CD8-positive, alpha-beta T cell (primary cell): ENCODE measurements at regions of chr2 and their contacts with region 1.

Region 1: DNA sequence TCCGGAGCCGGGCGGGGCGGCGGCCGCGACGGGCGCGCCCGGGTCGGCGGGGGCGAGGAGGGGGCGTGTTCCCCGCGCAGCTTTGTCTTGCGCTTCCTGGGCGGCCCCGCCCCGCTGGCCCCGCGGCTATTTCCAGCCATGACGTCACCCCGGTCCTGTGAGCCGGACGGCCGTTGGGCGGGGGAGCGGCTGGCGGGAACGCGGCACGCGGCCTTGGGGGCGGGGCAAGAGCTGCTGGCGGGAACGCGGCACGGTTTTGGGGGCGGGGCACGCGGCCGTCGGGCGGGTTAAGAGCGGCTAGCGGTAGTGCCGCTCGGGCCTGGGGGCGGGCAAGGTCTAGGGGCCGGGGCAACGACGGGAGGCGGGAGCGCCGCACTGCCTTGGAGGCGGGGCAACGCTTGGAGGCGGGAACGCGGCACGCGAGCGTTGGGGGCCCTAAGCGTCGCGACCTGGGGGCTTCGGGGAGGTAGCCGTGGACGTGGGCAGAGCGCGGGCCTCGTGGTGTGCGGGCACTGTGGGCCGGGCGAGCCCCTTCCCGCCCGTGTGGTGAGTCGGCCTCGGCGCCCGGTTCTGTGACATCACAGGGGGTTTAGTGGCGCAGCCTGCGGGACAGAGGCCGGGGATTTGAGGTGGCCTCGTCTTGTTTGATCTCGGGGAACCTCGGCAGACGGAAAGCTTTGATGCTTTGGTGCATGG is 704 bp downstream of the KLF11 start:
- DNase-seq: peak; percentile 72 to 96 (median 94)
- ATAC-seq: peak; percentile 66
- H3K4me3 ChIP-seq: peak overlapping the region; percentile 40 to 47
- H3K4me3 Mint-ChIP-seq: peak overlapping the region; percentile 77
- H3K27ac ChIP-seq: peak overlapping the region; percentile 67 to 74
- H3K27ac Mint-ChIP-seq: peak overlapping the region; percentile 90
- H3K4me1 ChIP-seq: peaks cover 18% of the 10 kb centered on the region
- H3K4me1 Mint-ChIP-seq: peaks cover 21% of the 10 kb centered on the region
- H3K27me3 ChIP-seq: no peaks in the 10 kb centered on the region
- H3K27me3 Mint-ChIP-seq: no peaks in the 10 kb centered on the region
- CTCF ChIP-seq: no peak

Region 2: DNA sequence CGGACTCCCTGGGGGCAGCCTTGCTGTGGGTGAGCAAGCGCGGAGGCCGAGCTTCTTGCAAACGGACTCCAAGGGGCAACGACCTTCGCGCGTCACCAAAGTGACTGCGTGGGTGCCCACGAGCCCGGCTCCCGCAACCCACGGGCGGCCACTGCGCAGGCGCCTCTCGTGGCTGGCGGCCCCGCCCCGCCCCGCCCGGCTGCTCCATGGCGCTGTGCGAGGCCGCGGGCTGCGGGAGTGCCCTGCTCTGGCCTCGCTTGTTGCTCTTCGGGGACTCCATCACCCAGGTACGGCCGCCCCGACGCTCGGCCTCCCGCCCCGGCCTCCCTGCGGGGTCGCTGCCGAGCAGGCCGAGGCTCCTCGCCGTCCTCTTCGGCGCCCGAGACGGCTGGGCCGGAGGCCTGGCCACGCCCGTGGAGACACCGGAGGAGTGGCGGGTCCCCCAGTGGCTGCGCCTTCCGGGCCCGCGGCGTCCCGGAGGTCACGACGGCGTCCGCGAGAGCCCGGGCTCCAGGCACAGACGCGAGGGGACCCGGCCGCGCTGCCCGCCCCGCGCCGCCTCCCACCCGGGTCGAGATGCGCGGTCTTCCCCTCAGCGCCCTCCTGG is 569.6 kb before region 1 on chr2 and contains the start of gene IAH1:
- CTCF ChIA-PET with region 1: no interaction called
- POLR2A ChIA-PET with region 1: interaction called, 6 read pairs
- intact Hi-C with region 1: loop called in 1 of 2 experiments (anchors 10 kb)
- DNase-seq: peak; percentile 58 to 86 (median 74)
- ATAC-seq: peak; percentile 80
- H3K4me3 ChIP-seq: peak within 1 kb of the TSS; percentile 83 to 91
- H3K4me3 Mint-ChIP-seq: peak within 1 kb of the TSS; percentile 84
- H3K27ac ChIP-seq: peak within 1 kb of the TSS; percentile 95 to 97
- H3K27ac Mint-ChIP-seq: peak within 1 kb of the TSS; percentile 90
- H3K4me1 ChIP-seq: peaks cover 18% of the 10 kb centered on the region
- H3K4me1 Mint-ChIP-seq: peaks cover 50% of the 10 kb centered on the region
- H3K27me3 ChIP-seq: no peaks in the 10 kb centered on the region
- H3K27me3 Mint-ChIP-seq: no peaks in the 10 kb centered on the region
- CTCF ChIP-seq: no peak
- total RNA-seq, gene IAH1: 48.2 to 52.5 TPM

Region 3: GRCh38 chr2:9778012-9778411 is 266.0 kb before region 1 on chr2:
- CTCF ChIA-PET with region 1: no interaction called
- POLR2A ChIA-PET with region 1: no interaction called
- intact Hi-C with region 1: no loop called
- DNase-seq: peak in 1 of 9 experiments; percentile 23
- ATAC-seq: no peak
- H3K4me3 ChIP-seq: no peak overlapping the region
- H3K4me3 Mint-ChIP-seq: no peak overlapping the region
- H3K27ac ChIP-seq: no peak overlapping the region
- H3K27ac Mint-ChIP-seq: no peak overlapping the region
- H3K4me1 ChIP-seq: peaks cover 26% of the 10 kb centered on the region
- H3K4me1 Mint-ChIP-seq: peaks cover 37% of the 10 kb centered on the region
- H3K27me3 ChIP-seq: no peaks in the 10 kb centered on the region
- H3K27me3 Mint-ChIP-seq: no peaks in the 10 kb centered on the region
- CTCF ChIP-seq: no peak

Region 4: GRCh38 chr2:9799665-9800632 is 244.1 kb before region 1 on chr2:
- CTCF ChIA-PET with region 1: interaction called, 23 read pairs
- POLR2A ChIA-PET with region 1: no interaction called
- intact Hi-C with region 1: loop called in 1 of 2 experiments (anchors 5 kb)
- DNase-seq: peak; percentile 70 to 88 (median 85)
- ATAC-seq: peak; percentile 83
- H3K4me3 ChIP-seq: peak overlapping the region in 1 of 2 experiments; percentile 37
- H3K4me3 Mint-ChIP-seq: peak overlapping the region; percentile 76
- H3K27ac ChIP-seq: peak overlapping the region in 1 of 2 experiments; percentile 48
- H3K27ac Mint-ChIP-seq: peak overlapping the region; percentile 4
- H3K4me1 ChIP-seq: peaks cover 14% of the 10 kb centered on the region
- H3K4me1 Mint-ChIP-seq: peaks cover 20% of the 10 kb centered on the region
- H3K27me3 ChIP-seq: no peaks in the 10 kb centered on the region
- H3K27me3 Mint-ChIP-seq: peaks cover 3% of the 10 kb centered on the region
- CTCF ChIP-seq: peak; percentile 97

Region 5: DNA sequence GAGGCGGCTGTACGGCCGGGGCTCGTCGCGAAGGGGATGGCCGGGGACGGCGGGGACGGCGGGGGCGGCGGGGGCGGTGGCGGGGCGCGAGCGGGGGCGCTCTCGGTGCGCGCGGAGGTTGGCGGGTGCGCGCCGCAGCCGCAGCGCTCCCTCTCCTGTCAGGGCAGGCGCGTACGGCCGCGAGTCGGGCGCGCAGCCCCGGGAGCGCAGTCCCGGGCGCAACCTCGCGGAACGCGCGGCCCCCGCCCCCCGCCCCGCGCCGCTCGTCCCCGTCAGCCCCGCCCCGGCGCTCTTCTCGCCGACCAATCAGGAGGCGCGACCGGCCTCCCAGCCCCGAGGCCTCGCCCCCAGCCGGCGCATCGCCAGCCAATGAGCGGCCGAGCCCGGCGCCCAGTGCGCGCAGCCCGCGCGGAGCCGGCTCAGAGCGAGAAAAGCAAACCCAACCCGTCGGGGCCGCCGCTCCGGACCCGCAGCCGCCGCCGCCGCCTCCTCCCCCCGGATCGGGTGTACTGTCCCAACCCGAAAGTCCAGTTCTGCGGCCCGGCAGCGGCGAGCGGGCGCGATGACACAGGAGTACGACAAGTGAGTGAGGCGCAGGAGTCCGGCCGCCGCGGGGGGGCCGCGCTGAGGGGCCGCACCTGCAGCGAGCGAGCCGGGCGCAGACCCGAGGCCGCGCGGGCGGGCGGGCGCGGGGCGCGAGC is 92.6 kb before region 1 on chr2 and contains the start of gene GRHL1:
- CTCF ChIA-PET with region 1: no interaction called
- POLR2A ChIA-PET with region 1: no interaction called
- intact Hi-C with region 1: loop called (anchors 1 kb)
- DNase-seq: peak; percentile 77 to 96 (median 89)
- ATAC-seq: peak; percentile 94
- H3K4me3 ChIP-seq: peak within 1 kb of the TSS; percentile 52 to 58
- H3K4me3 Mint-ChIP-seq: peak within 1 kb of the TSS; percentile 84
- H3K27ac ChIP-seq: no peak within 1 kb of the TSS
- H3K27ac Mint-ChIP-seq: peak within 1 kb of the TSS; percentile 41
- H3K4me1 ChIP-seq: peaks cover 11% of the 10 kb centered on the region
- H3K4me1 Mint-ChIP-seq: peaks cover 6% of the 10 kb centered on the region
- H3K27me3 ChIP-seq: peaks cover 8% of the 10 kb centered on the region in 2 experiments
- H3K27me3 Mint-ChIP-seq: peaks cover 42% of the 10 kb centered on the region
- CTCF ChIP-seq: no peak
- total RNA-seq, gene GRHL1: 0.76 to 0.86 TPM

Region 6: GRCh38 chr2:10028988-10029874 is 14.8 kb before region 1 on chr2:
- CTCF ChIA-PET with region 1: interaction called, 72 read pairs
- POLR2A ChIA-PET with region 1: interaction called, 5 read pairs
- intact Hi-C with region 1: loop called in 1 of 2 experiments (anchors 1 kb)
- DNase-seq: peak in 8 of 9 experiments; percentile 33 to 83 (median 50)
- ATAC-seq: peak; percentile 94
- H3K4me3 ChIP-seq: peak overlapping the region; percentile 29 to 42
- H3K4me3 Mint-ChIP-seq: peak overlapping the region; percentile 69
- H3K27ac ChIP-seq: peak overlapping the region; percentile 30 to 75
- H3K27ac Mint-ChIP-seq: peak overlapping the region; percentile 73
- H3K4me1 ChIP-seq: peaks cover 30% of the 10 kb centered on the region
- H3K4me1 Mint-ChIP-seq: peaks cover 21% of the 10 kb centered on the region
- H3K27me3 ChIP-seq: no peaks in the 10 kb centered on the region
- H3K27me3 Mint-ChIP-seq: no peaks in the 10 kb centered on the region
- CTCF ChIP-seq: no peak

Region 7: GRCh38 chr2:10122386-10123280 is 78.6 kb after region 1 on chr2 and contains the start of gene RRM2:
- CTCF ChIA-PET with region 1: no interaction called
- POLR2A ChIA-PET with region 1: no interaction called
- intact Hi-C with region 1: loop called in 1 of 2 experiments (anchors 2 kb)
- DNase-seq: peak; percentile 75 to 93 (median 87)
- ATAC-seq: peak; percentile 75
- H3K4me3 ChIP-seq: peak within 1 kb of the TSS; percentile 49 to 60
- H3K4me3 Mint-ChIP-seq: peak within 1 kb of the TSS; percentile 96
- H3K27ac ChIP-seq: no peak within 1 kb of the TSS
- H3K27ac Mint-ChIP-seq: no peak within 1 kb of the TSS
- H3K4me1 ChIP-seq: peaks cover 33% of the 10 kb centered on the region
- H3K4me1 Mint-ChIP-seq: peaks cover 44% of the 10 kb centered on the region
- H3K27me3 ChIP-seq: peaks cover 13 to 17% of the 10 kb centered on the region in 2 experiments
- H3K27me3 Mint-ChIP-seq: peaks cover 19% of the 10 kb centered on the region
- CTCF ChIP-seq: no peak
- total RNA-seq, gene RRM2: 1.6 to 2.1 TPM

Region 8: GRCh38 chr2:10812362-10813162 is 768.5 kb after region 1 on chr2 and contains the start of gene PDIA6:
- CTCF ChIA-PET with region 1: no interaction called
- POLR2A ChIA-PET with region 1: no interaction called
- intact Hi-C with region 1: loop called in 1 of 2 experiments (anchors 10 kb)
- DNase-seq: peak; percentile 89 to 96 (median 93)
- ATAC-seq: peak; percentile 90
- H3K4me3 ChIP-seq: peak within 1 kb of the TSS; percentile 65 to 84
- H3K4me3 Mint-ChIP-seq: peak within 1 kb of the TSS; percentile 91
- H3K27ac ChIP-seq: peak within 1 kb of the TSS; percentile 56 to 73
- H3K27ac Mint-ChIP-seq: peak within 1 kb of the TSS; percentile 86
- H3K4me1 ChIP-seq: peaks cover 27% of the 10 kb centered on the region
- H3K4me1 Mint-ChIP-seq: peaks cover 41% of the 10 kb centered on the region
- H3K27me3 ChIP-seq: no peaks in the 10 kb centered on the region
- H3K27me3 Mint-ChIP-seq: peaks cover 1% of the 10 kb centered on the region
- CTCF ChIP-seq: no peak
- total RNA-seq, gene PDIA6: 24.4 to 24.8 TPM